Astrocyte of the cerebellum (primary cell): ENCODE measurements at regions of chr4 and their contacts with region 1.

Region 1: DNA sequence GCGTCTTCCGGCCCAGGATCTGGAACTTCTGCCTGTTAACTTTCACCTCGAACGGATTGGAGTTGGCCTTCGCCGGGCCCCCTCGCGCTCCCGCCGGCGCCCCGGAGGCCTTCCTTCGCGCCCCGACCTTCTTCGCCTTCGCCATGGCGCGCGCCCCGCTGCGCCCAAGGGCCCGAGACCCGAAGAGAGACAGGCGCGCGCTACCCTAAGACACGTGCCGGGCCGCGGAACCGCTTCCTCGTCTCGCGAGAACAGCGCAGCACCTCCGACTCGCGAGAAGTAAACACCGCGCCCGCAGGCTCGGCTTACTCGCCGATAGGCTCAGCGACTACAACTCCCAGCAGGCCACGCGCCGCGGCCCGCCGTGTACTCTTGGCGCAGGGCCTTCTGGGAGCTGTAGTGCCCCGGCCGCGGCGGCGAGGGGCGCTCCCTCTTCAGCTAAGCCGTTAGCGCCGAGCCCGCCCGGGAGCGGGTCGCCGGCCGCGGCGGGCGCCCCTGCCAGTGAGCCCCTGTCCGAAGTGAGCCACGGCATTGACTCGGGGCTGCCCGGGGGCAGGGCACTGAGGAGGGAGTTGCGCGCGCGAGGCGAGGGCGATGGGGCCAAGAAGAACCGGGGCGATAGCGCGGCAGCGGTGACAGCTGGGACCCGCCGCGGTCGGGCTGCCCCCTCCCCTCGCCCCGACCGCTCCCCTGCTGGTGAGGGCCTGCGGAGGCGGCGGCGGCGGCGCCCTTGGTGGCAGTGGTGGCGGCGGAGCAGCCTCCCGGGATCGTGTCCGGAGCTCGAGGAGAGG is at the starts of genes GRK4 and NOP14:
- DNase-seq: peak; percentile 94
- H3K4me3 ChIP-seq: peak within 1 kb of the TSS; percentile 78
- CTCF ChIP-seq: peak; percentile 34

Region 2: DNA sequence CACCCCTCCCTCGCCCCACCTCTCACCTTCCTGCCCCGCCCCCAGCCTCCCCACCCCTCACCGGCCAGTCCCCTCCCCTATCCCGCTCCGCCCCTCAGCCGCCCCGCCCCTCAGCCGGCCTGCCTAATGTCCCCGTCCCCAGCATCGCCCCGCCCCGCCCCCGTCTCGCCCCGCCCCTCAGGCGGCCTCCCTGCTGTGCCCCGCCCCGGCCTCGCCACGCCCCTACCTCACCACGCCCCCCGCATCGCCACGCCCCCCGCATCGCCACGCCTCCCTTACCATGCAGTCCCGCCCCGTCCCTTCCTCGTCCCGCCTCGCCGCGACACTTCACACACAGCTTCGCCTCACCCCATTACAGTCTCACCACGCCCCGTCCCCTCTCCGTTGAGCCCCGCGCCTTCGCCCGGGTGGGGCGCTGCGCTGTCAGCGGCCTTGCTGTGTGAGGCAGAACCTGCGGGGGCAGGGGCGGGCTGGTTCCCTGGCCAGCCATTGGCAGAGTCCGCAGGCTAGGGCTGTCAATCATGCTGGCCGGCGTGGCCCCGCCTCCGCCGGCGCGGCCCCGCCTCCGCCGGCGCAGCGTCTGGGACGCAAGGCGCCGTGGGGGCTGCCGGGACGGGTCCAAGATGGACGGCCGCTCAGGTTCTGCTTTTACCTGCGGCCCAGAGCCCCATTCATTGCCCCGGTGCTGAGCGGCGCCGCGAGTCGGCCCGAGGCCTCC is 110.9 kb after region 1 on chr4 and contains the starts of genes HTT and HTT-AS:
- in situ Hi-C with region 1: loop called (anchors 25 kb)
- DNase-seq: peak; percentile 85
- H3K4me3 ChIP-seq: peak within 1 kb of the TSS; percentile 61
- CTCF ChIP-seq: peak; percentile 10